IMR-90 (cell line): ENCODE measurements at regions of chr19 and their contacts with region 1.

Region 1: DNA sequence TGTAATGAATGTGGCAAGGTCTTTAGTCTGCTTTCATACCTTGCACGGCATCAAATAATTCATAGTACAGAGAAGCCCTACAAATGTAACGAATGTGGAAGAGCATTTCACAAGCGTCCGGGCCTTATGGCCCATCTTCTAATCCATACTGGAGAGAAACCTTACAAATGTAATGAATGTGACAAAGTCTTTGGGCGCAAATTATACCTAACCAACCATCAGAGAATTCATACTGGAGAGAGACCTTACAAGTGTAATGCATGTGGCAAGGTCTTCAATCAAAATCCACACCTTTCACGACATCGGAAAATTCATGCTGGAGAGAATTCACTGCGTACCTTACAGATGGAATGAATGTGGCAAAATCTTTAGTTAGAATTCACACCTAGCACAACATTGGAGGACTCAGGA is 3.3 kb upstream of the ZNF880 start:
- DNase-seq: no peak
- ATAC-seq: no peak
- H3K4me3 ChIP-seq: no peak overlapping the region
- H3K27ac ChIP-seq: no peak overlapping the region
- H3K4me1 ChIP-seq: no peaks in the 10 kb centered on the region
- H3K27me3 ChIP-seq: no peaks in the 10 kb centered on the region
- CTCF ChIP-seq: no peak
- POLR2A ChIP-seq: no peak
- RAD21 ChIP-seq: no peak

Region 2: DNA sequence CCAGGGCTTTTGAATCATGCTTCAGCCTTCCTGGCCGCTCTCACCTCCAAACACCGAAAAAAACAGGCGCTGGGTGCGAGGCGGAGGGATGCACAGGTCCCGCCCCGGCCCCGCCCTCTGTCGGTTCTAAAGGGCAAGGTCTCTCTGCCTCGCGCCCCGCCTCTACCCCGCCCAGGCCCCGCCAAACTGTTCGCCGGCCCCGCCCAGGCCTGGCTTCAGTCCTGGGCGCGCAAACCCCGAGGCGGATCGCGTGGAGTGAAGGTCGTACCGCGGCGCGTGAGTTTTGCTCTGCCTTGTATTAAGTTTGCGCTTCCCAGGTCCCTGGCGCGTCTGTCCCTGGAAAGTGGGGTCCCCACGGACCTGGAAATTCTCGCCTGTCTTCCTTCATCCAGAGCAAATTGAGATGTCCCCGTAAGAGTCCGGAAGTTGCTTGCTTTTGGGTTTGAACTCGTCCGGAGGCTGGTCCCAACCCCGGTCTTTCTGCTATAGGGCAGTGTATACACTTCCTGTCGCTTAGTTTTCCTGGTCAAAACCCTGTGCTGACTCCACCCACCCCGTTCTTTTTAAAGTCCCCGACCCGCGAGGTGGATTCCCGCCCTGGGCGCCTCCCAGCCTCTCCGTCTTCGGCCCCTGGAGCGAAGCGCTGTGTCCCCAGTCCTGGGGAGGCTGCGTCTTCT is 169.5 kb after region 1 on chr19:
- CTCF ChIA-PET with region 1: interaction called, 4 read pairs
- POLR2A ChIA-PET with region 1: interaction called, 10 read pairs
- dilution Hi-C with region 1: no loop called
- in situ Hi-C with region 1: no loop called
- intact Hi-C with region 1: no loop called
- DNase-seq: peak; percentile 61
- ATAC-seq: peak; percentile 99
- H3K4me3 ChIP-seq: peak overlapping the region; percentile 57
- H3K27ac ChIP-seq: peak overlapping the region; percentile 75; the same call in 1 of the 2 replicates
- H3K4me1 ChIP-seq: no peaks in the 10 kb centered on the region; the same call in 1 of the 2 replicates
- H3K27me3 ChIP-seq: no peaks in the 10 kb centered on the region
- CTCF ChIP-seq: no peak
- POLR2A ChIP-seq: no peak
- RAD21 ChIP-seq: no peak